ENCODE measurements at regions of chr9 and their contacts with region 1.

Region 1: GRCh38 chr9:23379842-23380241 is 446.2 kb downstream of the ELAVL2 start:
- DNase-seq: no peak
- ATAC-seq: no peak
- H3K4me3 ChIP-seq: no peak overlapping the region
- H3K4me3 Mint-ChIP-seq: no peak overlapping the region
- H3K27ac ChIP-seq: no peak overlapping the region
- H3K27ac Mint-ChIP-seq: no peak overlapping the region
- H3K4me1 ChIP-seq: no peaks in the 10 kb centered on the region
- H3K4me1 Mint-ChIP-seq: no peaks in the 10 kb centered on the region
- H3K27me3 ChIP-seq: no peaks in the 10 kb centered on the region
- H3K27me3 Mint-ChIP-seq: no peaks in the 10 kb centered on the region

Region 2: GRCh38 chr9:23357651-23358050 is 22.2 kb before region 1 on chr9:
- CTCF ChIA-PET with region 1: no interaction called
- POLR2A ChIA-PET with region 1: no interaction called
- intact Hi-C with region 1: loop called in 1 of 2 experiments (anchors 1 kb)
- DNase-seq: no peak
- ATAC-seq: no peak
- H3K4me3 ChIP-seq: no peak overlapping the region
- H3K4me3 Mint-ChIP-seq: no peak overlapping the region
- H3K27ac ChIP-seq: no peak overlapping the region
- H3K27ac Mint-ChIP-seq: no peak overlapping the region
- H3K4me1 ChIP-seq: no peaks in the 10 kb centered on the region
- H3K4me1 Mint-ChIP-seq: no peaks in the 10 kb centered on the region
- H3K27me3 ChIP-seq: no peaks in the 10 kb centered on the region
- H3K27me3 Mint-ChIP-seq: no peaks in the 10 kb centered on the region

Region 3: DNA sequence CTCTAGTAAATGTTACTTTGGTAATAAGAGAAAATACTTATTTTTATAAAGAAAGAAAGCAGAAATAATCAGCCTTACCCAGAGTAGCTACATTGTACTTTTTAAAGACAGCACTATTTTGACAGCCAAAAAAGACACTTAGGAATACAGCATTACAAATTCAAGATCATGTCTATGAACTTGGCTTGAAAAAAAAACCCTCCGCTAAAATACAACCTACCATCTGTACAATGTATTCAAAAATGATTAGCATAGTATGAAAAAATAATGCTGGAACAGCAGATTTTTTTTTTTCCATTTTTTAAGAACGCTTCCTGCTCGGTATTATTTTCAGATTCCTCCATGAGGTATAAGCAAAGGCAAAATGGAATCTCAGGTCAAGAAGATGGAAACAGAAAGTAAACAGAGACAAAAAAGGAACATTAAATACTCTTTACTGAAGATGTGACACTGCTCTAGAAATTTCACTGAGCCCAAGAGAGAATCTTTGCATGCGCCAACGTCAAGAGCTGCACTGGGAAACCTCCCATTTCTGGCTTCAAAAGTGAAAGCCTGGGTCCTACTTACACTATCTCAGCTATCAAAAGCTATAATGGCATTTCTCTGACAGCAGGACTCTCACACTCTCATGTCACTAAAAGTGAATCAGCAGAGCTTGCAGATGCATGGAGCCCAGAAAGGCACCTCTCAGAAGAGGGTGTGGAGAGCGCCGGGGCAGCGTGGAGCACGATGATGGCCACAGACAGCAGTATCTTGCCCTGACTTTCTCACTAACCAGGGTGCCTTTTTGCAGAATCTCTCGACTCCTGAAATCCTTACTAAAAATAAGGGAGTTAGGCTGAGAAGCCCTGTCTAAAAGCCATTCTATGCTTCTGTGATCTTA is 278.8 kb after region 1 on chr9:
- CTCF ChIA-PET with region 1: no interaction called
- POLR2A ChIA-PET with region 1: no interaction called
- intact Hi-C with region 1: no loop called
- DNase-seq: no peak
- ATAC-seq: no peak
- H3K4me3 ChIP-seq: no peak overlapping the region
- H3K4me3 Mint-ChIP-seq: no peak overlapping the region
- H3K27ac ChIP-seq: no peak overlapping the region
- H3K27ac Mint-ChIP-seq: no peak overlapping the region
- H3K4me1 ChIP-seq: no peaks in the 10 kb centered on the region
- H3K4me1 Mint-ChIP-seq: no peaks in the 10 kb centered on the region
- H3K27me3 ChIP-seq: no peaks in the 10 kb centered on the region
- H3K27me3 Mint-ChIP-seq: peaks cover 0 to 4% (median 0%) of the 10 kb centered on the region in 5 donors